Dendritic cell treated with granulocyte-macrophage colony-stimulating factor and Interleukin-4, amounts not matched to agents 40 ng/mL and 50 ng/mL, for 4 days (primary cell): ENCODE measurements at regions of chr4 and their contacts with region 1.

Region 1: GRCh38 chr4:3074078-3074795 is at the starts of genes HTT and HTT-AS:
- H3K4me3 Mint-ChIP-seq: peak within 1 kb of the TSS; percentile 97
- H3K27ac Mint-ChIP-seq: peak within 1 kb of the TSS; percentile 97
- H3K4me1 Mint-ChIP-seq: peaks cover 28% of the 10 kb centered on the region
- H3K27me3 Mint-ChIP-seq: peaks cover 14% of the 10 kb centered on the region

Region 2: GRCh38 chr4:2468445-2469192 is 605.6 kb before region 1 on chr4 and contains the start of gene RNF4:
- intact Hi-C with region 1: no loop called
- H3K4me3 Mint-ChIP-seq: peak within 1 kb of the TSS; percentile 97
- H3K27ac Mint-ChIP-seq: peak within 1 kb of the TSS; percentile 97
- H3K4me1 Mint-ChIP-seq: peaks cover 47% of the 10 kb centered on the region
- H3K27me3 Mint-ChIP-seq: peaks cover 8% of the 10 kb centered on the region

Region 3: GRCh38 chr4:2923141-2923551 is 151.1 kb before region 1 on chr4:
- intact Hi-C with region 1: no loop called
- H3K4me3 Mint-ChIP-seq: no peak overlapping the region
- H3K27ac Mint-ChIP-seq: no peak overlapping the region
- H3K4me1 Mint-ChIP-seq: peaks cover 14% of the 10 kb centered on the region
- H3K27me3 Mint-ChIP-seq: no peaks in the 10 kb centered on the region

Region 4: GRCh38 chr4:2963175-2963965 is 110.9 kb before region 1 on chr4 and contains the starts of genes GRK4 and NOP14:
- intact Hi-C with region 1: loop called (anchors 10 kb)
- H3K4me3 Mint-ChIP-seq: peak within 1 kb of the TSS; percentile 93
- H3K27ac Mint-ChIP-seq: peak within 1 kb of the TSS; percentile 94
- H3K4me1 Mint-ChIP-seq: peaks cover 39% of the 10 kb centered on the region
- H3K27me3 Mint-ChIP-seq: peaks cover 4% of the 10 kb centered on the region

Region 5: DNA sequence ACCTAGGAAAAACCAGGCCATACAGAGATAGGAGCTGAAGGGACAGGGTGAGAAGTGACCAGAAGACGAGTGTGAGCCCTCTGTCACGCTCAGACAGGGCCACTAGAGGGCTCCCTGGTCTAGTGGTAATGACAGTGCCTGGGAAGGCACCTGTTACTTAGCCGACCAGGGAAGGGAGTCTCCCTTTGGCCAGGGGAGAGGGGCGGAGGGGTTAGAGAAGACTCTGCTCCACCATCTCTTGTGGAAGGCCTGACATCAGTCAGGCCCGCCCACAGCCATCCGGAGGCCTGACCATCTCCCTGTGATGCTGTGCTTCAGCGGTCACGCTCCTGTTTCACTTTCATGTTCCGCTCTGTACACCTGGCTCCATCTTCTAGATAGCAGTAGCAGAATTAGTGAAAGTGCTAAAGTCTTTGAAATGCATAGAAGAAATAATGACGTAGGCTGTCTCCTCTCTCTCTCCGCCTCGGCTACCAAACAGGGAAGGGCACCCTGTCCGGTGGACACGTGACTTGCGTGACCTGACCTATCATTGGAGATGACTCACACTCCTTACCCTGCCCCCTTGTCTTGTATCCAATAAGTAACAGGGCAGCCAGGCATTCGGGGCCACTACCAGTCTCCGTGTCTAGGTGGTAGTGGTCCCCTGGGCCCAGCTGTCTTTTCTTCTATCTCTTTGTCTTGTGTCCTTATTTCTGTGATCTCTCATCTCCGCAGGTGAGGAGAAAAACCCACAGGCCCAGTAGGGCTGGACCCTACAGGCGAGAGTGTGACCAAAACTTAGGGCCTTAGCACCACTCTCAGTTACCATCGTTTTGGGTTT is 26.6 kb before region 1 on chr4:
- intact Hi-C with region 1: loop called (anchors 2 kb)
- H3K4me3 Mint-ChIP-seq: peak overlapping the region; percentile 54
- H3K27ac Mint-ChIP-seq: no peak overlapping the region
- H3K4me1 Mint-ChIP-seq: peaks cover 37% of the 10 kb centered on the region
- H3K27me3 Mint-ChIP-seq: peaks cover 19% of the 10 kb centered on the region

Region 6: GRCh38 chr4:3122081-3122563 is 47.9 kb after region 1 on chr4:
- intact Hi-C with region 1: no loop called
- H3K4me3 Mint-ChIP-seq: no peak overlapping the region
- H3K27ac Mint-ChIP-seq: no peak overlapping the region
- H3K4me1 Mint-ChIP-seq: no peaks in the 10 kb centered on the region
- H3K27me3 Mint-ChIP-seq: no peaks in the 10 kb centered on the region